ENCODE measurements at regions of chr18 and their contacts with region 1.

Region 1: GRCh38 chr18:39764873-39765272 is 2190.2 kb upstream of the PIK3C3 start:
- DNase-seq: no peak

Region 2: DNA sequence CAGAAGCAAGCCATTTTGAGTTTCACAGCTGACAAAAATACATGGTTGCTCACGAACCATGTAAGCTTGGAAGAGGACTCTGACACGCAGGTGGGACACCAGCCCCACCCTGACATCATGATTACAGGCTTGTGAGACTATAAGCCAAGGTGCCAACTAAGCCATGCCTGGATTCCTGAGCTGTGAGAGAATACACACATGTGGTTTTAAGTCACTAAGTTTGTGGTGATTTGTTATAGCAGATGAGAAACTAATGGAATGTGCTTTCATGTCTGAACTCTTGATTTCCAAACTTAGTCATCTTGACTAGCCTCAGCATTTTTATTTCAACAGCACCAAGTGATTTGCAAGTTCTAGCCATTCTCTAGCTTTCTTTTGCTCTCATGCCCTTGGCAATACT is 1523.1 kb before region 1 on chr18:
- intact Hi-C with region 1: loop called in 1 of 2 experiments (anchors 5 kb)
- DNase-seq: no peak